Caco-2 (cell line): ENCODE measurements at regions of chr11 and their contacts with region 1.

Region 1: DNA sequence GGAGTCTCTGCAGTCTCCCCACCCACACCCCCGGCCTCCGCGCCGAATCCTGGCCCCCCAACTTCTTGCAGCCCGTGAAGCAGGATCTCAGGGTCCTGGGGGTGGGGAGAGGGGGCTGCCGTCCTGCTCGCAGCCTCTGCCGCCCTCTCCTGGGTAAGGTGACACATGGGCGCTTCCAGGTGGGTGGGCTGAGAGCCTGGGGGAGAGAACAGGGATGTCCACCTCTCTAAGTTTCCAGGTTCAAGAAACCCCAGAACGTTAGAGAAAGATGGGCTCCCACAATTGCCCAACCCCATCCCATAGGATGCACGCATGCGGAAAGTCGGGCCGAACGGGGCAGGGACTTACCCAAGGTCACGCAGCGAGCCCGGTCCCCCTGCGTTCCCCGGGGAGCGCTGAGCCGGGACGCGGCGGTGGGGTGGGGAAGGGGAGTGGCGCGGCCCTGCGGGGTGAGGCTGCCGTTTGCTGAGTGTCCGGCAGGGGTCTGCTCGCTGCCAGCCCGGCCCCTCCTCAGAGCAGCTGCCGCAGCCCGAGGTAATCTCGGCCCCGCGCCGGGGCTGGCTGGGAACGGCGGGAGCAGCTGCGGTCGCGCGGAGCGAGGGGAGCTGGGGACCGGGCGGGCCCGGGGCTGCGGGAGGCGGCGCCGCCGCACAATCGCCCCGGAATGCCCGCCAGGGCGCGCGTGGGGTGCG is 705 bp upstream of the CAPN1 start:
- DNase-seq: peak; percentile 86 to 93
- H3K4me3 ChIP-seq: peak overlapping the region; percentile 84
- H3K4me3 Mint-ChIP-seq: peak overlapping the region; percentile 85
- H3K27ac Mint-ChIP-seq: peak overlapping the region; percentile 90
- H3K4me1 ChIP-seq: peaks cover 13% of the 10 kb centered on the region
- H3K4me1 Mint-ChIP-seq: no peaks in the 10 kb centered on the region
- H3K27me3 ChIP-seq: no peaks in the 10 kb centered on the region
- H3K27me3 Mint-ChIP-seq: no peaks in the 10 kb centered on the region
- CTCF ChIP-seq: peak; percentile 63 to 83

Region 2: DNA sequence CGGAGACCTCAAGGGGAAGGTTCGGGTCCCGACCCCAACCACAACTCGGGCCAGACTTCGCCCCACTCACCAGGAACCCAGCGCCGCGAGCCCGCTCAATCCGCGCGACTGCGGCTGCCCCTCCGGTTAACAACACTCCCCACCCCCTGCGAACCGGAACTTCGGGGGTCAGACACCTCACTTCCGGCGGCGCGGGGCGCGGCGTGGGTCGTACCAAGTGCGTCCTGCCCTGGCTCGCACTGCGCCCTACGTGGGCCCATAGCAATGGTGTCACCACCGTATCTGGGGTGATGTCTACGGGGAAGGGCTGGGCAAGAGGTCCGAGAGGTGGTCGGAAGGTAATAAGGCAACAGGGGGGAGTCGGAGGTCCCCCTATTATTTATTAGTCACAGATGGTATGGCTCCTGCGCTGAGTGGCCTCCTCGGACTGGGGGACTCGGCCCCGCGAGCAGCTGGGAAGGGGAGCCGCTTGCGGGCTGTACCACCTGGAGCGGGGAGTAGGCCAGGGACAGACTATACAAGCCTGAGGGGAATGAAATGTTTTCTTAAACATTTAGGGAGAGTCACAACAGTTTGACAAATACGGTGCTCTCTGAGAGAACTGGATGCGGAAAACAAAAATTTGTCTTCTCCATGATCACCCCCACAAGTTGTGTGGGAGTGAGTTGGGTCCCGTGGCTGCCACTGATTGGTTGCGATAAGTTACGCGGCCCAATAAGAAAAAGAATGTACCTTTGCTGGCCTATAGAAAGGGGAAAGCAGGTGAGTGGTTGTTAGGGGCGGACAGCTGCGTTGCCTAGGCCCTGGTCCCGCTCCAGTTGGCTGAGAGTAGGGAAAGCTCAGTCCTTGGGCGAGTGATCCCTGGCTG is 46.4 kb before region 1 on chr11 and contains the start of gene SYVN1:
- CTCF ChIA-PET with region 1: interaction called, 22 read pairs
- POLR2A ChIA-PET with region 1: interaction called, 32 read pairs
- intact Hi-C with region 1: loop called (anchors 1 kb)
- DNase-seq: peak; percentile 94 to 96
- H3K4me3 ChIP-seq: peak within 1 kb of the TSS; percentile 99
- H3K4me3 Mint-ChIP-seq: peak within 1 kb of the TSS; percentile 93
- H3K27ac Mint-ChIP-seq: peak within 1 kb of the TSS; percentile 100
- H3K4me1 ChIP-seq: 0 out of 2 replicates have a peak, but pooled peaks cover 5% of the 10 kb centered on the region
- H3K4me1 Mint-ChIP-seq: peaks cover 8% of the 10 kb centered on the region
- H3K27me3 ChIP-seq: no peaks in the 10 kb centered on the region
- H3K27me3 Mint-ChIP-seq: no peaks in the 10 kb centered on the region
- CTCF ChIP-seq: no peak
- total RNA-seq, gene SYVN1: 50.9 and 56.5 TPM in 2 replicates